Calu3 (cell line): ENCODE measurements at regions of chr11 and their contacts with region 1.

Region 1: DNA sequence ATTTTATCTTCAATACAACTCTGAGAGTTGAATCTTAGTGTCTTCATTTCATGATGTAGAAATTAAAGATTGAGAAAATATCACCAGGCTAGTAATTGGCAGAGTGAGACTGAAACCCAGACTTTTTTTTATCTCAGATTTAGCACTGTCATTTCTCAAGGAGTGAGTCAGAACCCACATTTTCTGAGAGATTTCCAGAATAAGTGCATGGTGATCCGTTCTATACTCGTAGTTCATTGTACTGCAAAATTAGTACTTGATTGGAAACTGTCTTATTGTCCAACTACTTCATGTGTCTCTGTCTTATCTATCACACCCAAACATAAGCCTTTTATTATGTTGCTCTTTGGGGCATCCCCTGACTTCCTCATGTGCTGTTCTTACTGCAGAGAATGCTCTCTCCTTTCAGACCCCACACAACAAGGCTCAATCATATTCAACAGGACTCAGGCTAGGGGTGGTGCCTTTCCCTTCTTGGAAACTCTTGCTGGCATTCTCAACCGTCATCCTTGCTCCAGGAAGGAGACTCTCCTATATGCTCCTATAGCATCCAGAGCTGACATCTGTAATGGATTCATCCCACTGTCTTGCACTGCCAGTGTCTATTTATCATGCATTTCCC is 76.7 kb upstream of the BLID start:
- DNase-seq: no peak
- H3K4me3 Mint-ChIP-seq: no peak overlapping the region
- H3K27ac Mint-ChIP-seq: no peak overlapping the region
- H3K4me1 Mint-ChIP-seq: peaks cover 24% of the 10 kb centered on the region
- H3K27me3 Mint-ChIP-seq: no peaks in the 10 kb centered on the region
- CTCF ChIP-seq: no peak

Region 2: GRCh38 chr11:122150216-122151124 is 42.3 kb before region 1 on chr11:
- CTCF ChIA-PET with region 1: no interaction called
- intact Hi-C with region 1: loop called (anchors 5 kb)
- DNase-seq: no peak
- H3K4me3 Mint-ChIP-seq: no peak overlapping the region
- H3K27ac Mint-ChIP-seq: no peak overlapping the region
- H3K4me1 Mint-ChIP-seq: no peaks in the 10 kb centered on the region
- H3K27me3 Mint-ChIP-seq: peaks cover 15% of the 10 kb centered on the region
- CTCF ChIP-seq: no peak